SK-N-SH (cell line): ENCODE measurements at regions of chr13 and their contacts with region 1.

Region 1: GRCh38 chr13:99442273-99442895 is 58.9 kb upstream of the TM9SF2 start:
- DNase-seq: peak; percentile 58
- H3K4me3 ChIP-seq: no peak overlapping the region; a peak in 1 of 4 replicates
- H3K27ac ChIP-seq: no peak overlapping the region
- H3K4me1 ChIP-seq: peaks cover 0 to 7% of the 10 kb centered on the region in 2 experiments; a peak in 1 of 4 replicates
- H3K27me3 ChIP-seq: peaks cover 7% of the 10 kb centered on the region; the same call in 1 of the 2 replicates
- CTCF ChIP-seq: peak; percentile 93
- EP300 ChIP-seq: no peak
- RAD21 ChIP-seq: peak; percentile 89

Region 2: GRCh38 chr13:98598043-98598442 is 844.3 kb before region 1 on chr13:
- CTCF ChIA-PET with region 1: no interaction called
- POLR2A ChIA-PET with region 1: no interaction called
- DNase-seq: no peak
- H3K4me3 ChIP-seq: no peak overlapping the region
- H3K27ac ChIP-seq: no peak overlapping the region
- H3K4me1 ChIP-seq: no peaks in the 10 kb centered on the region
- H3K27me3 ChIP-seq: no peaks in the 10 kb centered on the region
- CTCF ChIP-seq: no peak; the same call in 1 of the 2 replicates
- EP300 ChIP-seq: no peak
- RAD21 ChIP-seq: peak; percentile 35; the same call in 1 of the 2 replicates

Region 3: GRCh38 chr13:99454518-99455183 is 12.3 kb after region 1 on chr13:
- CTCF ChIA-PET with region 1: interaction called, 20 read pairs
- POLR2A ChIA-PET with region 1: no interaction called
- DNase-seq: no peak
- H3K4me3 ChIP-seq: no peak overlapping the region; a peak in 1 of 4 replicates
- H3K27ac ChIP-seq: no peak overlapping the region
- H3K4me1 ChIP-seq: no peaks in the 10 kb centered on the region
- H3K27me3 ChIP-seq: no peaks in the 10 kb centered on the region
- CTCF ChIP-seq: no peak
- EP300 ChIP-seq: no peak
- RAD21 ChIP-seq: no peak